ENCODE measurements at regions of chr7 and their contacts with region 1.

Region 1: DNA sequence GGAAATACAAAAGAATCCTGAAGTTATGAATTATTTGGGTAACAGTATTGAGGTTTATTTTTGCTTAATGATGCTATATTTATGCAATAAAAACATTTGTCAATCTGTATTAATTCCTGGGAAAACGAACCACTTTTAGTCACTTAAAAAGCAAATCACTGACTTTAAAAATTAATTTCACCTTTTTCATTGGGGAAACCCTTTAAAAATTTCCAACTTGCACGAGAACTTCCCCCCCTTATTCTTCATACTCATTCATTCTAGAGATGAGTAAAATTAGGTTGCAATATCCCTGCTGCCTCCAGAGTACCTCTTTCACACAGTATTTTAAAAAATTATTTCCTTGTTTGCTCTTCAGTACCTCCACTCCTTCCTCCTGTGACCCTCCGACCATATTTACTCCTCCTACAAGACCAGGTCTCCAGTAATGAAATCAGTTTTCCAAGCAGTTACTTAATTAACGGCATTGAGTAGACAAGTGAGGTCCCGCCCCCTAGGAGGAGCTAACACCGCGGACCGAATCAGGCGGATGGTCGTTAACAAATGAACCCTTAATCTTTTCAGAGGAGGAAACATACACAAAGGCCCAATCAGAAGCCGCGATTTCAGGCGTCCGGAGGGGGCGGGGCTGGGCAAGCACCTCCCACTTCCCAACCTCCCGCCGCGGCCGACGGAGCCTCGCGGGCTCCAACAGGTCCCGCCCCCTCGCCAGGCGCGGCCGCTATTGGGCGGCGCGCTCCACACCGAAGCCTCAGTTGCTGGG is 465 bp upstream of the TRIM24 start:
- DNase-seq: peak; percentile 98
- H3K4me3 Mint-ChIP-seq: peak overlapping the region; percentile 94
- H3K27ac Mint-ChIP-seq: peak overlapping the region; percentile 63
- H3K4me1 Mint-ChIP-seq: peaks cover 22% of the 10 kb centered on the region
- H3K27me3 Mint-ChIP-seq: no peaks in the 10 kb centered on the region

Region 2: GRCh38 chr7:138161600-138162081 is 298.0 kb before region 1 on chr7:
- CTCF ChIA-PET with region 1: interaction called, 5 read pairs
- intact Hi-C with region 1: loop called (anchors 2 kb)
- DNase-seq: peak; percentile 88
- H3K4me3 Mint-ChIP-seq: no peak overlapping the region
- H3K27ac Mint-ChIP-seq: no peak overlapping the region
- H3K4me1 Mint-ChIP-seq: no peaks in the 10 kb centered on the region
- H3K27me3 Mint-ChIP-seq: no peaks in the 10 kb centered on the region

Region 3: DNA sequence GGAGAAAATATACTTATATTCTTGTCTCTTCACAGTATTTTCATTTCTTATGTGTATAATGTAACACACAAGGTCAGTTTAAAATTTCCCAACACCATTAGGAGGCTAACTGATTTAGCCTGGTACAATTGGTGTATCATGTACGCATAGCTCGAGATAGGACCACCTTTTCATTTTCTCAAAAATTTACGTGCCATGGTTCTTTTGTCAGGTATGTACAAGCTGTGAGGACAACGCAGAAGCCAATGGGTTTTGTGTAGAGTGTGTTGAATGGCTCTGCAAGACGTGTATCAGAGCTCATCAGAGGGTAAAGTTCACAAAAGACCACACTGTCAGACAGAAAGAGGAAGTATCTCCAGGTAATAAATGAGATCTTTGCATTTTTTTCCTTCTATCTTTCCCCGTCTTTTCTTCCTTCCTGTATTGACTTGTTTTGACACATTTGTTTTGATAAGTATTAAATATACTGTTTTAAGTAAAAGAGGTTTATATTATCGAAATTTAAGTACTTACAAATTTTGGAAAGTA is 55.5 kb after region 1 on chr7:
- CTCF ChIA-PET with region 1: no interaction called
- intact Hi-C with region 1: no loop called
- DNase-seq: no peak
- H3K4me3 Mint-ChIP-seq: no peak overlapping the region
- H3K27ac Mint-ChIP-seq: no peak overlapping the region
- H3K4me1 Mint-ChIP-seq: peaks cover 2% of the 10 kb centered on the region
- H3K27me3 Mint-ChIP-seq: no peaks in the 10 kb centered on the region

Region 4: DNA sequence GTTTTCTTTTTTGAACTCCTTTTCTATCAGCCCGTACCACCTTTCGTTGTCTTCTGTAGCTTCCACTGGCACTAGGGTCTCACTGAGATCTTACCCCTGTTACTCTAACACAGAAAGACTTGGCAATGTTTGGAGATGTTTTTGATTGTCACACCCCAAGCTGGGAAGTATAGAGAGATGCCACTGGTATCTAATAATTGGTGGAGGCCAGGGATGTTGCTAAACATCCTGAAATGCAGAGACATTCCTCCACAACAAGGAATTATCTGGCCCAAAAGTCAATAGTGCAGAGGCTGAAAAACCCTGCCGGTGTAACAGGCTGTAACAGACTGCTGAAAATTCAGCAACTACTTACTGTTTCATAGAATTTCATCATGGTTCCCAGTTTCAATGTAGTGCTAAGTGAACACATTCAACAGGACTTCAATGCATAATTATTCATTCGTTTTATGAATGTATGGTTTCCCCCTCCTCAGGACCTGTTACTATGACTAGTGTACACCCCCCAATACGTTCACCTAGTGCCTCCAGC is 116.4 kb after region 1 on chr7:
- CTCF ChIA-PET with region 1: no interaction called
- intact Hi-C with region 1: no loop called
- DNase-seq: no peak
- H3K4me3 Mint-ChIP-seq: no peak overlapping the region
- H3K27ac Mint-ChIP-seq: no peak overlapping the region
- H3K4me1 Mint-ChIP-seq: peaks cover 2% of the 10 kb centered on the region
- H3K27me3 Mint-ChIP-seq: no peaks in the 10 kb centered on the region

Region 5: GRCh38 chr7:138587485-138587884 is 127.9 kb after region 1 on chr7:
- CTCF ChIA-PET with region 1: no interaction called
- intact Hi-C with region 1: no loop called
- DNase-seq: no peak
- H3K4me3 Mint-ChIP-seq: no peak overlapping the region
- H3K27ac Mint-ChIP-seq: no peak overlapping the region
- H3K4me1 Mint-ChIP-seq: no peaks in the 10 kb centered on the region
- H3K27me3 Mint-ChIP-seq: no peaks in the 10 kb centered on the region

Region 6: GRCh38 chr7:138608275-138608674 is 148.7 kb after region 1 on chr7:
- CTCF ChIA-PET with region 1: no interaction called
- intact Hi-C with region 1: loop called (anchors 5 kb)
- DNase-seq: peak; percentile 57
- H3K4me3 Mint-ChIP-seq: no peak overlapping the region
- H3K27ac Mint-ChIP-seq: no peak overlapping the region
- H3K4me1 Mint-ChIP-seq: peaks cover 16% of the 10 kb centered on the region
- H3K27me3 Mint-ChIP-seq: no peaks in the 10 kb centered on the region

Region 7: DNA sequence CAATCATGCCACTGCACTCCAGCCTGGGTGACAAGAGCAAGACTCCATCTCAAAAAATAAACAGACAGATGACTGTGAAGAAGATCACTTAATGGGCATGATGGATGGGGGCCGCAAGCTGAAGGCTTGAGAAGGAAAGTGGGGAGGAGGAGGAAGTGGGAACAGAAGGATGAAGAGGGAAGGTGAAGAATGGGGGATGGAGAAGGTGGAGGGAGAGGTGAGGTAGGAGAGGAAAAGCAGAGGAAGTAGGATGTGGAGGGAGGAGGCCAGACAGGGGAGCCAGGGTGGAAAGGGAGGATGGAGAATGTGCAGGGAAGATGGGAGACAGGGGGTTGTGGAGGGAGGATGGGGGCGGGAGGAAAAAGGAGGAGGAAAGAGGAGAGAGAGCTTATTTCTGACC is 172.8 kb after region 1 on chr7:
- CTCF ChIA-PET with region 1: no interaction called
- intact Hi-C with region 1: no loop called
- DNase-seq: no peak
- H3K4me3 Mint-ChIP-seq: no peak overlapping the region
- H3K27ac Mint-ChIP-seq: no peak overlapping the region
- H3K4me1 Mint-ChIP-seq: peaks cover 14% of the 10 kb centered on the region
- H3K27me3 Mint-ChIP-seq: no peaks in the 10 kb centered on the region

Region 8: GRCh38 chr7:138738551-138739335 is 279.1 kb after region 1 on chr7:
- CTCF ChIA-PET with region 1: no interaction called
- intact Hi-C with region 1: loop called (anchors 1 kb)
- DNase-seq: peak; percentile 94
- H3K4me3 Mint-ChIP-seq: no peak overlapping the region
- H3K27ac Mint-ChIP-seq: no peak overlapping the region
- H3K4me1 Mint-ChIP-seq: peaks cover 6% of the 10 kb centered on the region
- H3K27me3 Mint-ChIP-seq: no peaks in the 10 kb centered on the region

Region 9: GRCh38 chr7:139109188-139109982 is 649.8 kb after region 1 on chr7 and contains the start of gene ZC3HAV1:
- CTCF ChIA-PET with region 1: no interaction called
- intact Hi-C with region 1: loop called (anchors 10 kb)
- DNase-seq: peak; percentile 90
- H3K4me3 Mint-ChIP-seq: peak within 1 kb of the TSS; percentile 92
- H3K27ac Mint-ChIP-seq: peak within 1 kb of the TSS; percentile 95
- H3K4me1 Mint-ChIP-seq: peaks cover 34% of the 10 kb centered on the region
- H3K27me3 Mint-ChIP-seq: no peaks in the 10 kb centered on the region
- total RNA-seq, gene ZC3HAV1: 131 to 134 TPM

Region 10: DNA sequence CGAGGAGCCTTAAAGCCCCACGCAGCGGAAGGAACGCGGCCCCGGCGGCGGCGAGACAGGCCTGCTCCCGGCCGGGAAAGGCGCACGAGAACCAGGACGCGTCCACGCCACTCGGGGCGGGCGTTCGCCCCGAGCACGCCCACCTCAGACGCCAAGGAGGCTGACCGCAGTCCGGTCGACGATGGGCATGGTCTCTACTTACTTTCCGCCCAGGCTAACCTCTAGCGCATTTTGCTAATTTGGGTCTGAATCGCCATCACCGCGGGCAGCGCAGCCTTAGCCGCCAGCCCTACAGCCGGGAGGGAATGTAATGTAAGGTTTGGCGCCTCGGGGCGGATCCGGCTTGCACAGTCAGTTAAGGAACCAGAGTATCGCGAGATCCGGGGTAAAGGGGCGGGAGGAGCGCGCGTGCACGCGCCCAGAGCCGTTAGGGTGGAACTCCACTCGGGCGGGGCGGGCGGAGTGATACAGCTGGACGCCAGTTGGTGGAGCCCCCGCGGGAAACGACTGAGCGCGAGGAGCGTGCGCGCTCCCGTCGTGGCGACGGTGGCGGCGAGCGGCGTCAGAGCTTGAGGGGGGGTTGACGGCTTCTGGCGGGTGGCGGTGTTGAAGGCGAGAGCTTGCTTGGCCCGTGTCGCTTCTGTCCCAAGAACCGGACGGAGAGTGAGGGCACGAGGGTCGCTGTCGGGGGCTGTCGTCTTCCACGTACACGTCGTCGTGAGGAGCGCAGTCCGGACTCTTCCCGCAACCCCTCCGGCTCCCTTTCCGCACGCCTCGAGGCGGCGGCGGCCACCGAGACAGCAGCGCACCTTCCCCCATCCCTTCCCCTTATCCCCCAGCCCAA is 900.0 kb after region 1 on chr7 and contains the start of gene LUC7L2:
- CTCF ChIA-PET with region 1: no interaction called
- intact Hi-C with region 1: loop called (anchors 1 kb)
- DNase-seq: peak; percentile 100
- H3K4me3 Mint-ChIP-seq: peak within 1 kb of the TSS; percentile 93
- H3K27ac Mint-ChIP-seq: peak within 1 kb of the TSS; percentile 98
- H3K4me1 Mint-ChIP-seq: peaks cover 33% of the 10 kb centered on the region
- H3K27me3 Mint-ChIP-seq: no peaks in the 10 kb centered on the region
- total RNA-seq, gene LUC7L2: 132 to 138 TPM